A673 (cell line): ENCODE measurements at regions of chr1 and their contacts with region 1.

Region 1: DNA sequence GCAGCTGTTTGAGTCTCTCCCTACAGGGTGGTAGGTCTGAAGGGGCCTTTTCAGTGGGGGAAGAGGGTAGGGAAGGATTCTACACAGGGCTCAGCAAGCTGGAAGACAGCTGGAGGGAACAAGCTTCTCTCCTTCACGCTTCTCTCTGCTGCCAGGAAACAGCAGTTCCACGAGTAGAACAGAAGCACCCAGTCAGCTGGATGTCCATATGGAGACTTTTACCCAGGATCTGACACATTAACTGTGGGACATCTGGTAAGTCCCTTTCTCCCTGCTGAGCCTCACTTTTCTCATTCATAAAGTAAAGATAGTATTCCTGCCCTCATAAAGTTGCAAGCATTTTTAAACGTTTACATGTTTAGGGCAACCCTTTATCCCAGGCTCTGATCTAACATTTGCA is 280.3 kb downstream of the OMA1 start:
- DNase-seq: no peak
- H3K4me3 ChIP-seq: no peak overlapping the region
- H3K27ac ChIP-seq: no peak overlapping the region
- H3K4me1 ChIP-seq: no peaks in the 10 kb centered on the region
- H3K27me3 ChIP-seq: no peaks in the 10 kb centered on the region
- CTCF ChIP-seq: no peak

Region 2: DNA sequence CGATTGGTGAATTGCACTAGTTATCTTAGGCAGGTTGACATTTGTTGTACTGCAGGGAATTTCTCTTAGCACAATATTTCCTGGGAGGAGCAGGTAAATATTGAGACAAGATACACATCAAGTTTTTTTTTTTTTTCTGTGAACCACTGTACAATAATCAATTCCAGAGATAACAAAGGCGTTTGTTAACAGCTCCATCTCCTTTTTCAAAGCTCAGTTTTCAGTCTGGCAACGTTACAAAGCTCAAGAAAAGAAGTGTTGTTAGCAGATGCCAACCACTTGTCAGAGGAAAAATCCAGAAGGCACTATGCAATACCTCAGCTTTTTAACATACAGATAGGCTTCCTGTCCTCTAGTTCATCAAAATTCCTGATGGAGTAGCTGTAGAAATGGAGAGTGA is 801.5 kb before region 1 on chr1:
- CTCF ChIA-PET with region 1: no interaction called
- POLR2A ChIA-PET with region 1: interaction called, 16 read pairs
- intact Hi-C with region 1: no loop called
- DNase-seq: no peak
- H3K4me3 ChIP-seq: no peak overlapping the region
- H3K27ac ChIP-seq: no peak overlapping the region
- H3K4me1 ChIP-seq: peaks cover 22% of the 10 kb centered on the region
- H3K27me3 ChIP-seq: no peaks in the 10 kb centered on the region
- CTCF ChIP-seq: no peak

Region 3: GRCh38 chr1:58190267-58190988 is 75.8 kb before region 1 on chr1:
- CTCF ChIA-PET with region 1: no interaction called
- POLR2A ChIA-PET with region 1: no interaction called
- intact Hi-C with region 1: no loop called
- DNase-seq: peak; percentile 24
- H3K4me3 ChIP-seq: no peak overlapping the region
- H3K27ac ChIP-seq: no peak overlapping the region
- H3K4me1 ChIP-seq: no peaks in the 10 kb centered on the region
- H3K27me3 ChIP-seq: no peaks in the 10 kb centered on the region
- CTCF ChIP-seq: no peak